ENCODE measurements at regions of chr13 and their contacts with region 1.

Region 1: GRCh38 chr13:24307211-24308067 is 1.9 kb upstream of the C1QTNF9 start:
- DNase-seq: peak; percentile 3 to 58
- H3K4me3 ChIP-seq: no peak overlapping the region
- H3K27ac ChIP-seq: no peak overlapping the region; the same call in 1 of the 2 replicates
- H3K4me1 ChIP-seq: peaks cover 16% of the 10 kb centered on the region
- H3K27me3 ChIP-seq: no peaks in the 10 kb centered on the region
- CTCF ChIP-seq: no peak

Region 2: DNA sequence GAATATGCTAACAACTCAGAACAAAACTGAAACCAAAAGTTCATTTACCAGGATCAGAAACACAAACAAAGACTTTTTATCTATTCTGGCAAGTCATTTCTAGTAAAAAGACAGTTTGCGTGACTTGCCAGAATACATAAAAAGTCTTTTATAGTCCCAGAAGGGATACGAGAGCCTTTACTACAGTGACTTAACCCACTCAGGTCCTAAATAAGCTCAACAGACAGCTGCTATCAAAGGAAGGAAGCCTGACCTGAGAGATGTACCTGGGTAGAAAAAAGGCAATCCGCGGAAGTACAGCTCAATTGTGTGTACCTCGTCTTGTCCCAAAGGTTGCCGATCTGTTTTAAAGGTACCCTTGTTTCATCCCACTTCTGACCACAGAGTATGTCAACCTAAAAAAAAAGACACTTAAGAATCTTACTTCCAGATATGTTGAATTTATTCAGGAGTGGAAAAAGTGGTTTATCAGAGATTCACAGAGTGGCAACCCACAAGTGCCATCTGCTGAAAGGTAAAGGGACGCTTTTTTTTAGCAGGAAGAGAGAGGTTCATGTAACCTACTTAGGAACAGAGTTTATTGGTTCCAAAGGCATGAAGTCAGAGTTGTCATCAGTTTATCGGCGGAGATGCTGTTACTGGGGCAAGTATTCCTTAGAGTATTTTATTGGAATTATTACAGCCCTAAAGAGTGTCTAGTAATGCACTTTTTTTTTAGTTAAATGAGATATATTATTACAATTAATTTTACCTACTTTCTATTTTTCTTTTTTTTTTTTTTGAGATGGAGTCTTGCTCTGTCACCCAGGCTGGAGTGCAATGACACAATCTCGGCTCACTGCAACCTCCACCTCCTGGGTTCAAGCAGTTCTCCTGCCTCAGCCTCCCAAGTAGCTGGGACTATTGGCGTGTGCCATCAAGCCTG is 340.5 kb before region 1 on chr13:
- CTCF ChIA-PET with region 1: no interaction called
- POLR2A ChIA-PET with region 1: no interaction called
- intact Hi-C with region 1: no loop called
- DNase-seq: no peak
- H3K4me3 ChIP-seq: no peak overlapping the region
- H3K27ac ChIP-seq: no peak overlapping the region
- H3K4me1 ChIP-seq: no peaks in the 10 kb centered on the region
- H3K27me3 ChIP-seq: no peaks in the 10 kb centered on the region
- CTCF ChIP-seq: no peak

Region 3: DNA sequence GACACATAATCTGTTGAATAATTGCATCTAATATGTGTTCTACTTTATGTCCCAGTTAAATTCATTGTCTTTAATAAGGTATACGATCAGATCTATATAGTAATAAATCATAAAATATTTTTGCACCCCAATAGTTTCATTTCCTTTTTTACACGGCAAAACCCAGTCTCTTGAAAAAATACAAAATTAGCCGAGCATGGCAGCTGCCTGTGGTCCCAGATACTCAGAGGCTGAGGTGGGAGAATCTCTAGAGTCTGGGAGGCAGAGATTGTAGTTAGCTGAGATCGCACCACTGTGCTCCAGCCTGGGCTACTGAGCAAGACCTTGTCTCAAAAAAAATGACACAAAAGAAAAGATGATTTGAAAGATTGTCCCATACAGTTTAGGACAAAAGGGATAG is 257.4 kb after region 1 on chr13:
- CTCF ChIA-PET with region 1: no interaction called
- POLR2A ChIA-PET with region 1: no interaction called
- intact Hi-C with region 1: loop called (anchors 10 kb)
- DNase-seq: no peak
- H3K4me3 ChIP-seq: no peak overlapping the region
- H3K27ac ChIP-seq: no peak overlapping the region
- H3K4me1 ChIP-seq: peaks cover 19% of the 10 kb centered on the region
- H3K27me3 ChIP-seq: no peaks in the 10 kb centered on the region
- CTCF ChIP-seq: no peak

Region 4: DNA sequence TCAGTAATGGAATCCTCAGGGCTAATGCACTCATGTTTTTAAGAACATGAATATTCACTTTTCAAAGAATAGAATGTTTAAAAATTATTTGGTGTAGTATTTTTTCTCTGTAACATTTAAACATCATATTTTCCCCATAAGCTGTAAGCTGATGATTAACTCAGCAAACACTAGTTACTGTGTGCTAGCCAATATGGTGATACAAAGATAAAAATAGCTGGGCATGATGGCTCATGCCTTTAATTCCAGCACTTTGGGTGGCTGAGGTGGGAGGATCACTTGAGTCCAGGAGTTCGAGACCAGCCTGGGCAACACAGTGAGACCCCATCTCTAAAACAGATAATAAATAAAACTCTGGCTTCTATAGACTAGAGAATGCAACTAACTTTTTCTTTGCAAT is 469.7 kb after region 1 on chr13:
- CTCF ChIA-PET with region 1: no interaction called
- POLR2A ChIA-PET with region 1: interaction called, 12 read pairs
- intact Hi-C with region 1: no loop called
- DNase-seq: no peak
- H3K4me3 ChIP-seq: no peak overlapping the region
- H3K27ac ChIP-seq: no peak overlapping the region
- H3K4me1 ChIP-seq: no peaks in the 10 kb centered on the region
- H3K27me3 ChIP-seq: no peaks in the 10 kb centered on the region
- CTCF ChIP-seq: no peak

Measured in PC-9 (cell line).